Pancreas (tissue), 10 donors: ENCODE measurements at regions of chr1 and their contacts with region 1.

Region 1: DNA sequence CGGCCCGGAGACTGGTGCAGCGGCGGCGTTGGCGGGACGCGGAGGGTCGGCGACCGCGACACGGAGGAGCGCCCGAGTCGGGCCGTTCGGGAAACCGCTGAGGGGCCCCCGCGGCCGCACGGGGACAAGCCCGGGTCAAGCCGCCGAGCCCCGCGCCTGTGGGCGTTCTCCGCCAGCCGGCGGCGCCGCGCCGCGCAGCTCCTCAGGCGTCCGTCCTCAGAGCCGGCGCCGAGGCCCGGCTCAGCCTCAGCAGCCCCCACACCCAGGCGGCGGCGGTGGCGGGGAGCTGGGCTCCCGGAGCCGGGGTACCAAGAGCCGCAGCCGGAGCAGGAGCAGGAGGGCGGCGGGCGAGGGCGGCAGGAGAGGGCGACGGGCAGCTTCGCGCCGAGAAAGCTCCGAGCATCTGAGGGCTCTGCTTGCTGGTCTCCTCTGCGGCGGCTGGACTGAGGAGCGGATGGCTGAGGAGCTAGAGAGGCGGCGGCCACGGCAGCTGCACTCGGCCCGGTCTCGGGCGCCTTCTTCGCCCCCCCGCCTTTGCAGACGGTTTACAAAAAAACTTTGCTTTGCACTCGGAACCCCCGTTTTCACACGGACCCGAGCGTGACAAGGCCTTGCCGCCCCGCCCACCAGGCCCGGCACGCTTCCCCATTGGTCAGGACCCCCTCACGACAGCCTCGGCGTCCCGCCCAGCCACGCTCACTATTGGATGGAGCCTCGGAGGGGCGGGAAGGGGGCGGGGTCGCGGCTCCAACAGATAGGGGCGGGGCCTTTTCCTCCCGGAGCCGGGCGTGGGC is at the start of gene SLC30A1:
- DNase-seq: peak; percentile 99 to 100 (median 100)
- ATAC-seq: peak; percentile 85 to 94 (median 91)
- H3K4me3 ChIP-seq: peak within 1 kb of the TSS; percentile 80 to 96 (median 93)
- H3K27ac ChIP-seq: peak within 1 kb of the TSS; percentile 91 to 95 (median 93)
- H3K4me1 ChIP-seq: peaks cover 10 to 24% (median 21%) of the 10 kb centered on the region in 3 donors
- H3K27me3 ChIP-seq: no peaks in the 10 kb centered on the region
- CTCF ChIP-seq: no peak
- total RNA-seq, gene SLC30A1: 4.7 to 19.5 (median 9.8) TPM

Region 2: GRCh38 chr1:211514030-211514754 is 64.6 kb before region 1 on chr1:
- intact Hi-C with region 1: loop called in 1 of 3 experiments (anchors 10 kb)
- DNase-seq: peak; percentile 78 to 87 (median 84)
- ATAC-seq: peak; percentile 73 to 90 (median 80)
- H3K4me3 ChIP-seq: no peak overlapping the region
- H3K27ac ChIP-seq: peak overlapping the region in 1 of 4 donors; percentile 57
- H3K4me1 ChIP-seq: peaks cover 0 to 3% (median 0%) of the 10 kb centered on the region in 3 donors
- H3K27me3 ChIP-seq: no peaks in the 10 kb centered on the region
- CTCF ChIP-seq: peak; percentile 26 to 79 (median 58)

Region 3: GRCh38 chr1:211648980-211649934 is 70.4 kb after region 1 on chr1:
- intact Hi-C with region 1: loop called in 2 of 3 experiments (anchors 5 kb)
- DNase-seq: peak in 4 of 6 donors; percentile 49 to 73 (median 63)
- ATAC-seq: peak in 3 of 4 donors; percentile 85 to 93 (median 88)
- H3K4me3 ChIP-seq: no peak overlapping the region
- H3K27ac ChIP-seq: peak overlapping the region in 2 of 4 donors; percentile 12 to 27
- H3K4me1 ChIP-seq: peaks cover 4 to 13% (median 4%) of the 10 kb centered on the region in 3 donors
- H3K27me3 ChIP-seq: no peaks in the 10 kb centered on the region
- CTCF ChIP-seq: peak in 3 of 4 donors; percentile 38 to 70 (median 63)

Region 4: GRCh38 chr1:211654838-211655787 is 76.3 kb after region 1 on chr1:
- intact Hi-C with region 1: loop called in 1 of 3 experiments (anchors 5 kb)
- DNase-seq: peak; percentile 79 to 98 (median 90)
- ATAC-seq: peak; percentile 97 to 100 (median 98)
- H3K4me3 ChIP-seq: no peak overlapping the region
- H3K27ac ChIP-seq: no peak overlapping the region
- H3K4me1 ChIP-seq: no peaks in the 10 kb centered on the region
- H3K27me3 ChIP-seq: no peaks in the 10 kb centered on the region
- CTCF ChIP-seq: peak; percentile 76 to 91 (median 84)